Activated CD8-positive, alpha-beta memory T cell treated with anti-CD3 and anti-CD28 coated beads, Interleukin-2, amount 10 ng/mL, durations not matched to agents 7 days and 5 days (primary cell): ENCODE measurements at regions of chr16 and their contacts with region 1.

Region 1: GRCh38 chr16:70737377-70738082 is 51.7 kb upstream of the MTSS2 start:
- DNase-seq: peak; percentile 93
- ATAC-seq: peak; percentile 87
- H3K4me3 Mint-ChIP-seq: peak overlapping the region; percentile 55
- H3K27ac Mint-ChIP-seq: peak overlapping the region; percentile 96
- H3K4me1 Mint-ChIP-seq: peaks cover 43% of the 10 kb centered on the region
- H3K27me3 Mint-ChIP-seq: no peaks in the 10 kb centered on the region

Region 2: DNA sequence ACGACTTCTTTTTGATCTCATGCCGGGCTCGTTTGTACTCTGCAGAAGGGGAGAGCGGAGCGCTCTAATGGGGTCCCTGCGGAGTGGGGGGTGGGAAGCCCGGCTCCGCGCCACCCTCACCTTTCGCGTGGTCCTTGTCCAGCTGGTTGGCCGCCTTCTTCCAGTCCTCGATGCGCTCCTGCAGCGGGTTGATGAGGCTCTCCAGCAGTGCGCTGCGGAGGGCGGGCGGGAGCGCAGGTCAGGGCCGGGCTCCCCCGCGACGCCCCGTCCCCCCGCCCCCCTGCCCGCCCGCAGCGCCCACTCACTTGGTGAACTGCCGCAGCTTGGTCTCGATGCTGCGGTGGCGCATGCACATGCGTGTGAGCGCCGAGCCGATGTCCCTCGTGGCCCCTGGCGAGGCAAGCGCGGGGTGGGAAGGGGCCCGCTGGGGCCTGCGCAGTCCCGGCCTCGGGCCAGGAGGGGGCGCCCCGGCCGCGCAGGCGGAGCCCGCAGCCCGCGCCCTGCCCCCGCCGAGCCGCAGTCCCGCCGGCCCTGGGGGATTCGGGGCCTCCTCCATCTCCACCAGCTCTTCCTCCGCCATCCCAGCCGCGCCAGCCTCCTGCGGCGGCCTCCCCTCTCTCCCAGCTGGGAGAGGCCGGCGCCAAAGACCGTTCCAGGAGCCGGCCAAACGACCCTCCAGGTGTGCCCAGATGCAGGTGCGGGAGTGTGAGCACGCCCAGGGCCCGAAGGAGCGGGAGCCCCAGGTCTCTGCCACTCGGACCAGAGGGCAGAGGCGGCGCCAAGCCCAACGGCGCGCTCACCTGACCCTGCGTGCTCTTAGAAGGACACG is 57.6 kb before region 1 on chr16:
- CTCF ChIA-PET with region 1: interaction called, 10 read pairs
- DNase-seq: no peak
- ATAC-seq: no peak
- H3K4me3 Mint-ChIP-seq: no peak overlapping the region
- H3K27ac Mint-ChIP-seq: no peak overlapping the region
- H3K4me1 Mint-ChIP-seq: peaks cover 9% of the 10 kb centered on the region
- H3K27me3 Mint-ChIP-seq: peaks cover 16% of the 10 kb centered on the region

Region 3: DNA sequence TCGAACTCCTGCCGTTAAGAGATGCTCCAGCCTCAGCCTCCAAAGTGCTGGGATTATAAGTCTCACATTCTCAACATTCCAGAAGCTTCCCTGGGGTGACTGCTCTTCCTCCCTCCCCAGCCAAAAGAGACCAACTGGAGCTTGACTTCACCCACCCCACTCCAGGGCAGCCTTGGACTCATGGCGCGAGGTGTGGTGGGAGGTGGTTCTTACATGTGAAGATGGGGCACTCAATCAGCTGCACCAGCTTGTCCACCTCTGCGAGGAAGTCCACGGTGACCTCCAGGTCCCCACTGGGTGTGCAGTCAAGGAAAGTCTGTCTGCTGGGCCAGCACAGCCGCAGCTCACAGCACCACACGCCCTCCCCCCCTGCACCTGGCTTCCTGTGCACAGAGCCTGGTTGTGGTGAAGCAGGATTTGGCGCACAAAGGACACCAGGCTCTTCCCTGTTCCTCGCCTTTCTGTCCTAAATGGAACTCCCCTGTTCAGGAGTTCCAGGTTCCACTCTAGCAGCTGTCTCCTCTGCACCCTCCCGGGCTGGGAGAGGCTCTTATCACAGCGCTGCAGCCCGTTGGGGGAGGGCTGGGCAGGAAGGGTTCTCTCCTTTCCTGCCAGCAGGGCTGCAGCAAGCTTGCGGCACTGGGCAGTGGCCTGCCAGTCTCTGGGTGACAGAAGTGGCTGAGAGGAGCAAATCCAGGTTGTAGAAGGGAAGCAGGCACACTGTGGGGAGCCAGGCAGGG is 42.0 kb before region 1 on chr16:
- CTCF ChIA-PET with region 1: interaction called, 14 read pairs
- DNase-seq: peak; percentile 71
- ATAC-seq: peak; percentile 70
- H3K4me3 Mint-ChIP-seq: no peak overlapping the region
- H3K27ac Mint-ChIP-seq: peak overlapping the region; percentile 72
- H3K4me1 Mint-ChIP-seq: peaks cover 28% of the 10 kb centered on the region
- H3K27me3 Mint-ChIP-seq: no peaks in the 10 kb centered on the region